Mammary epithelial cell (primary cell): ENCODE measurements at regions of chr22 and their contacts with region 1.

Region 1: DNA sequence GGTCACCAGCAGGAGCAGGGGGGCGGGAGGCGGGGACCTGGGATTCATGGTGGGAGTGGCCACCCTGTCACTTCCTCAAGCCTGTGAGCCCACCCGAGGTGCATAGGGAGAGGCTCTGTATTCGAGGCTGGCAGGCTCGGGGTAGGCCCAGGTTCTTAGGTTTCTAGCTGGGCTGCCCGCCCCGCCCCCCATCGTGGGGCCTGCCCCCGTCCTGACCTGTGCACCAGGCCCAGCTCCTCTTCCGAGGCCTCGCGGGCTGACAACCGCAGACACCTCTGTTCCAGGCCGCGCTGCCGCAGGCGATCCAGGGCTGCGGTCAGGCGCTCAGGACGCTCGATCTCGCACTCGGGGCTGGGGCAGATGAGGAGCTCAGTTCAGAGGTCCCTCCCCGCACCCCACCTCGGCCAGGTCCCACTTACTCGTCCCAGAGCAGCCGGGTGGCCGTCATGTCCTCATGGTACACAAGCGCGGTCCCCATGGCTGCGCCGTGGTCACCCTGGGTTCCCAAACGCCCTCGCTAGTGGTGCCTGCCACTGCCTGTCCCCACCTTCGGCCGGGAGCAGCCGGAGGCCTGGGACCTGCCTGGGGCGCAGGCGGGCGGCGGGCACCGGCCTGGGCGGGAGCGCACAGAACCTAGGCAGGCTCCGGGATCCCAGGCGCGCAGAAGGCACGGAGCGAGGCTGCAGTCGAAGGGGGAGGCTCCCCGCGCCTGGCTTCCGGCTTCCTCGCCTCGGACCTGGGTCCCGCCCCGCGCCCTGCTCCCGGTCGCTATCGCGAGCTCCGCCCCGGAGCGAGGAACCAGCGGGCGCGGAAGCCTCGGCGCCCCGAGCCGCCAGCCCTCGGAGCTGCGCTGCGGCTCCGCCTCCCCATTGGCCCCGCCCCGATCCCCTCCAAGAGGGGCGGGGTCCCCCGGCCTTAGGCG is at the start of gene HDAC10:
- DNase-seq: peak; percentile 76
- H3K4me3 ChIP-seq: peak within 1 kb of the TSS; percentile 67 to 76 (median 73)
- H3K27ac ChIP-seq: no peak within 1 kb of the TSS
- H3K4me1 ChIP-seq: peaks cover 33% of the 10 kb centered on the region
- H3K27me3 ChIP-seq: no peaks in the 10 kb centered on the region
- CTCF ChIP-seq: no peak
- total RNA-seq, gene HDAC10: 10.7 to 23.6 TPM

Region 2: GRCh38 chr22:49586244-49586748 is 664.5 kb before region 1 on chr22:
- CTCF ChIA-PET with region 1: no interaction called
- dilution Hi-C with region 1: no loop called
- in situ Hi-C with region 1: no loop called
- intact Hi-C with region 1: no loop called
- DNase-seq: no peak
- H3K4me3 ChIP-seq: no peak overlapping the region
- H3K27ac ChIP-seq: no peak overlapping the region
- H3K4me1 ChIP-seq: no peaks in the 10 kb centered on the region
- H3K27me3 ChIP-seq: no peaks in the 10 kb centered on the region
- CTCF ChIP-seq: no peak

Region 3: GRCh38 chr22:50157709-50158375 is 93.0 kb before region 1 on chr22:
- CTCF ChIA-PET with region 1: no interaction called
- dilution Hi-C with region 1: no loop called
- in situ Hi-C with region 1: no loop called
- intact Hi-C with region 1: no loop called
- DNase-seq: peak; percentile 68
- H3K4me3 ChIP-seq: peak overlapping the region in 1 of 3 experiments; percentile 26
- H3K27ac ChIP-seq: no peak overlapping the region
- H3K4me1 ChIP-seq: peaks cover 10% of the 10 kb centered on the region
- H3K27me3 ChIP-seq: no peaks in the 10 kb centered on the region
- CTCF ChIP-seq: no peak

Region 4: DNA sequence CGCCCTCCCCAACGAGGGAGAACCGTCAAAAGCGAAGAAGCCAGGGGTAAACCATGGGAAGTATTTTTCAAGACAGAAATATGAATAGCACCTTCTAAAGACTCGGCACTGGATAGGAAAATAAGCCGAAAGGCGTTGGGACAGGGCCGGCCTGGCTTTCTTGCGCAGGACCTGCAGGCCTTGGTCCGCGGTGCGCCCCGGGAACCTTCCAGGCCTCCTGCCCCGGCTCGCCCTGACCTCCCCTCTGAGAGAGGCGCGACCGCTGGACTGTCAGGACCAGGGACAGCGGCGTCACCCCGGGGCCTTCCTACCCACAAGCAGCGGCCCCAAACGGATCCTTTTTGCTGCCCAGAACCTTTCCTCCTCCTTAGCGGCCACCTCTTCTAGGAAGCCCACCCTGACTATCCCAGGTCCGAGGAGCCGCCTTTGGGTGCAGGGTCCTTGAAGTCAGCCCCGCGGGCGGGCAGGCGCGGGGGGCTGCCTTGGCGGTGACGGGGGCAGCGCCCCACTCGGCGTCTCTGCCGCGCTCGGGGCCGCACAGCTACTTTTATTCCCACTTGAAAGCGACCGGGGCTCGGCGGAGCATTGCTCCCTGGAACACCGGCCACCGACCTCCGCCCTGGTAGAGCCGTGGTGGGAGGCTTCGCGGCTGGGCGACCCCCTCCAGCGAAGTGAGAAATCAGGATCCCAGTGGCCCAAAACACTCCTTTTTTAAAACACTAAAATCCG is 20.0 kb after region 1 on chr22:
- CTCF ChIA-PET with region 1: no interaction called
- dilution Hi-C with region 1: no loop called
- in situ Hi-C with region 1: no loop called
- intact Hi-C with region 1: loop called (anchors 1 kb)
- DNase-seq: peak; percentile 64
- H3K4me3 ChIP-seq: peak overlapping the region; percentile 48 to 53 (median 53)
- H3K27ac ChIP-seq: no peak overlapping the region
- H3K4me1 ChIP-seq: peaks cover 29% of the 10 kb centered on the region
- H3K27me3 ChIP-seq: no peaks in the 10 kb centered on the region
- CTCF ChIP-seq: no peak

Region 5: GRCh38 chr22:50305923-50306566 is 55.2 kb after region 1 on chr22:
- CTCF ChIA-PET with region 1: no interaction called
- dilution Hi-C with region 1: no loop called
- in situ Hi-C with region 1: no loop called
- intact Hi-C with region 1: no loop called
- DNase-seq: peak; percentile 97
- H3K4me3 ChIP-seq: peak overlapping the region; percentile 71 to 79 (median 75)
- H3K27ac ChIP-seq: peak overlapping the region; percentile 80
- H3K4me1 ChIP-seq: peaks cover 47% of the 10 kb centered on the region
- H3K27me3 ChIP-seq: no peaks in the 10 kb centered on the region
- CTCF ChIP-seq: no peak

Region 6: GRCh38 chr22:50326959-50327710 is 76.3 kb after region 1 on chr22 and contains the start of gene DENND6B:
- CTCF ChIA-PET with region 1: no interaction called
- dilution Hi-C with region 1: no loop called
- in situ Hi-C with region 1: no loop called
- intact Hi-C with region 1: loop called (anchors 1 kb)
- DNase-seq: peak; percentile 64
- H3K4me3 ChIP-seq: peak within 1 kb of the TSS; percentile 26 to 80 (median 77)
- H3K27ac ChIP-seq: peak within 1 kb of the TSS; percentile 54
- H3K4me1 ChIP-seq: peaks cover 13% of the 10 kb centered on the region
- H3K27me3 ChIP-seq: no peaks in the 10 kb centered on the region
- CTCF ChIP-seq: peak; percentile 40 to 45
- total RNA-seq, gene DENND6B: 2.0 to 3.4 TPM

Region 7: GRCh38 chr22:50361688-50362087 is 110.9 kb after region 1 on chr22:
- CTCF ChIA-PET with region 1: interaction called, 3 read pairs
- dilution Hi-C with region 1: no loop called
- in situ Hi-C with region 1: no loop called
- intact Hi-C with region 1: loop called (anchors 1 kb)
- DNase-seq: no peak
- H3K4me3 ChIP-seq: no peak overlapping the region
- H3K27ac ChIP-seq: no peak overlapping the region
- H3K4me1 ChIP-seq: no peaks in the 10 kb centered on the region
- H3K27me3 ChIP-seq: no peaks in the 10 kb centered on the region
- CTCF ChIP-seq: no peak

Region 8: DNA sequence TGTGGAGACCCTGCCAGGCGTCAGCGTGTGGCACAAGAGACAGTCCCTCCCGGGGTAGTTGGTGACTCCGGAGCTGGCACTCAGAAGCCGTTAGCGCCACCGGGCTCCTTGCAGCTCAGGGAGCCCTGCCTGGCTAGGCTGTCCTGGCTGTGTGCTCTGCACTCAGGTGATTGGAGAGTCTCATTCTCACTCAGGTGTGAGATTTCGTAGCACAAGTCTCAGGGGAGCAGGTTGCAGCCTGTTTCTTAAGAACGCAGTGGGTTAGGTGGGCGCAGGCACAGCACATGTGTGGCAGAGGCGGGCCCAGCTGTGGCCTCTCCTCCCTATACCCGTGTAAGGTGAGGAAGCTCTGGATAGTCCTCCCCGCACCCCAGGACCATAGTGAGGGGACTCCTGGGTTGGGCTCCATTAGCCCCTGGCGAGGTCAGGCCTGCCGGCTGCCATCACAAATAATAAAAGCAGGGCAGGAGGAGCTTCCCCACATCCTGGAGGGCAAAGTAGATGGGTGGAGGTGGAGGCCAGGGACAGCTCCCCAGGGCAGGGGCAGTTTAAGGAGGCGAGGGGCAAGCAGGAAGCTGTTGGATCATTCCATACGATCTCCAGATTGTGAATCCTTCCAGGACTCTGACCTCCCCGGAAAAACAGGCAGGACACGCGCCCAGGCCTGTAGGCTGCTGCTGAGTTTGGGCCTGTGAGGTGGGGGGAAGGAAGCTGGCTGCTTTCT is 184.6 kb after region 1 on chr22:
- CTCF ChIA-PET with region 1: no interaction called
- dilution Hi-C with region 1: no loop called
- in situ Hi-C with region 1: no loop called
- intact Hi-C with region 1: loop called (anchors 5 kb)
- DNase-seq: peak; percentile 39
- H3K4me3 ChIP-seq: no peak overlapping the region
- H3K27ac ChIP-seq: no peak overlapping the region
- H3K4me1 ChIP-seq: peaks cover 19% of the 10 kb centered on the region
- H3K27me3 ChIP-seq: no peaks in the 10 kb centered on the region
- CTCF ChIP-seq: no peak